ENCODE measurements at regions of chr9 and their contacts with region 1.

Region 1: GRCh38 chr9:91949946-91950664 is at the start of gene ROR2:
- DNase-seq: peak; percentile 39 to 70
- H3K4me3 ChIP-seq: peak within 1 kb of the TSS; percentile 51 to 77 (median 69)
- H3K27ac ChIP-seq: peak within 1 kb of the TSS; percentile 70 to 78
- H3K4me1 ChIP-seq: peaks cover 0 to 8% of the 10 kb centered on the region in 2 donors
- H3K27me3 ChIP-seq: no peaks in the 10 kb centered on the region
- CTCF ChIP-seq: peak in 1 of 3 donors; percentile 85
- POLR2A ChIP-seq: no peak
- total RNA-seq, gene ROR2: 2.1 to 25.6 (median 10.2) TPM

Region 2: DNA sequence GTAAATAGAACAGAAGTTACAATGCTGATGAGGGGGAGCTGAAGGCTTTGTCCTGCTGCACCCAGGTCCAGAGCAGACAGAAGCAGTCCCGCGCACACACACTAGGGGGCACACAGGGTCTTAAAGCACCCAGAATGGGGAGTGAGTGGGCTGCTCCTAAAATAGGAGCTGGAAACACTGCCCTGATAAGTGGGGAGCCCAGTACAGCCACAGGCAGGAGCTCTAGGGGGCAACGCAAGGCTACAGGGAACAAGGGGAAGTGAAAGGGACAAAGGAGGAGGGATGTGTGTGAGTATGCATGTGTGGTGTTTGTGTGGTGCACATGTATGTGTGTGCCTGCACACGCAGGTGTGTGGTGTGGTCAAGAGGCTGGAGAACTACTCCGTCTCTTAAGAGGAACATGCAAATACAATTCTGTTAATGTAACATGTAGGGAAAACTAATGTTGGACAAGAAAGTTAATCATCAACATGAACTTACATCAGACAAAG is 191.6 kb before region 1 on chr9:
- intact Hi-C with region 1: loop called (anchors 10 kb)
- DNase-seq: no peak
- H3K4me3 ChIP-seq: no peak overlapping the region
- H3K27ac ChIP-seq: peak overlapping the region in 1 of 2 donors; percentile 25
- H3K4me1 ChIP-seq: no peaks in the 10 kb centered on the region
- H3K27me3 ChIP-seq: no peaks in the 10 kb centered on the region
- CTCF ChIP-seq: peak in 1 of 3 donors; percentile 42
- POLR2A ChIP-seq: no peak